Activated CD8-positive, alpha-beta memory T cell treated with anti-CD3 and anti-CD28 coated beads, Interleukin-2, amount 10 ng/mL, durations not matched to agents 7 days and 5 days (primary cell): ENCODE measurements at regions of chr16 and their contacts with region 1.

Region 1: DNA sequence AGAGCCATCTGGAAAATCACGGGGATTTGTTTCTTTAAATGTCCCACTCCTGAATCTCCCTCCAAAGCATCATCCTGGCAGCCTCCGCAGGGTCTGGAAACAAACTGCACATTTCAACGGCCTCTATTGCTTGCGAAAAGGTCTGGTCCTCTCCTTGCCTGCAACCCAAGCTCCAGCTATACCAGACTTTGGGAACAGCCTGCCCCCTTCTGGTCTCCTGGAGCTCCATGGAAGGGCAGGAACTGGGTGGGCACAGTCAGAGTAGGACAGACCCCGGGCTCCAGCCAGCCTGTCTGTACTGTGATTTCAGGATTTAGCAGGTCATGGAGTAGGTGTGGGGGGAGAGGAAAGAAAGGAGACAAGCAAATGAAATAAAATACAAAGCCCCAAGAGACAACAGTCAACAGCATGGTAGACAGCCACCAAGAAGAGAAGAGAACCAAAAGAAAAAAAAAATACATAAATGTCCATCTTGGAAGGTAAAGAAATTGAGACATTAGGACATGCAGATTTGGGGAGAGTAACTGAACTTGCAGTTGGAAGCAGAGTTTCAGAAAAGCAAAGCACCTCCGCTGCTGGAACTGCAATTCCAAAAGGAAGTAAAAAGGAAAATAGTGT is 2.7 kb downstream of the XYLT1 start:
- DNase-seq: peak; percentile 64
- ATAC-seq: peak; percentile 34
- H3K4me3 Mint-ChIP-seq: peak overlapping the region; percentile 99
- H3K27ac Mint-ChIP-seq: peak overlapping the region; percentile 29
- H3K4me1 Mint-ChIP-seq: peaks cover 57% of the 10 kb centered on the region
- H3K27me3 Mint-ChIP-seq: peaks cover 11% of the 10 kb centered on the region

Region 2: DNA sequence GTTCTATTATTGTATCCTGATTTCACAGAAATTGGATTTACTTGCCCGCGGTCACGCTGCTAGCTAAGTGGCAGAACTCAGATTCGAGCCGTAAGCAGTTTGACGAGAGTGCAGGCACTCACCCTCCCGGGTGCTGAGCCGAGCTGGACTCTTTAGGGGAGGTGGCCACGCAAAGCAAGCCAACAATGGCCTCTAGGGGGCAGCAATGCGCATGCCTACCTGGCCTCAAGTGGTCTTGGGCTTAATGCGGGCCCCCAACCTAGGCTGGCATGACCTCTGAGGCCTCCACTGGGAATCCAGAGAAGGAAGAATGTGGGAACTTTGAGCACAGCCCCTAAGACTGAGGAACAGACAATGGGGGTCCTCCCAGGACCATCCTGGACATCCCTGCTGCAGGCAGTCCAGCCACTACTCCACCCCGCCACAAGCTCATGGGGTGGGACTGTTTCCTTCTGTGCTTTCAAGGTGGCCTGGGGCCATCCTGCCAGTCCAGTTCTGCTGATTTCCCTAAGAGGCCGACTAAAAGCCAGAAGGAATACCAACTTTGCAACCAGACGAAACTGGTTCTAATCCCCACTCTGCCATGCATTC is 273.7 kb before region 1 on chr16:
- CTCF ChIA-PET with region 1: interaction called, 10 read pairs
- DNase-seq: peak; percentile 64
- ATAC-seq: no peak
- H3K4me3 Mint-ChIP-seq: no peak overlapping the region
- H3K27ac Mint-ChIP-seq: no peak overlapping the region
- H3K4me1 Mint-ChIP-seq: no peaks in the 10 kb centered on the region
- H3K27me3 Mint-ChIP-seq: no peaks in the 10 kb centered on the region

Region 3: DNA sequence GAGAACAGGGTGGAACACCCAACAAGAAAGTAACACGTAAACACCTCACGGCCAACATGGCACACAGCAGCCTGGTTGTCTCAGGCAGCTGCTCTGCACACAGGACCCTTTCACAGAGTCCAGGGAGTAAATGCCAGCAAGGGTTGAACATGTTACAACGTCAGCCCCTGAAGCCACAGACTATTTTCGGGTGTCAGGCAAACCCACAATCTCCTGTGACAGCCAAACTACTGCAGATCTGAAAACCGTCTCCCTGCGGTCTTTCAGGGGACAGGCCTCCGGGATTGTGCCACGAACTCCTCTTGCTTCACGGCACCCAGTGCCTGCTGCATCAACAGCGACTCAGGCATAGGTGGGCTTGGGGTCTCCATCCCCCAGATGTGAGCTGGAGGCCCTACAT is 125.0 kb before region 1 on chr16:
- CTCF ChIA-PET with region 1: interaction called, 16 read pairs
- DNase-seq: peak; percentile 89
- ATAC-seq: peak; percentile 59
- H3K4me3 Mint-ChIP-seq: peak overlapping the region; percentile 55
- H3K27ac Mint-ChIP-seq: peak overlapping the region; percentile 93
- H3K4me1 Mint-ChIP-seq: peaks cover 83% of the 10 kb centered on the region
- H3K27me3 Mint-ChIP-seq: no peaks in the 10 kb centered on the region

Region 4: DNA sequence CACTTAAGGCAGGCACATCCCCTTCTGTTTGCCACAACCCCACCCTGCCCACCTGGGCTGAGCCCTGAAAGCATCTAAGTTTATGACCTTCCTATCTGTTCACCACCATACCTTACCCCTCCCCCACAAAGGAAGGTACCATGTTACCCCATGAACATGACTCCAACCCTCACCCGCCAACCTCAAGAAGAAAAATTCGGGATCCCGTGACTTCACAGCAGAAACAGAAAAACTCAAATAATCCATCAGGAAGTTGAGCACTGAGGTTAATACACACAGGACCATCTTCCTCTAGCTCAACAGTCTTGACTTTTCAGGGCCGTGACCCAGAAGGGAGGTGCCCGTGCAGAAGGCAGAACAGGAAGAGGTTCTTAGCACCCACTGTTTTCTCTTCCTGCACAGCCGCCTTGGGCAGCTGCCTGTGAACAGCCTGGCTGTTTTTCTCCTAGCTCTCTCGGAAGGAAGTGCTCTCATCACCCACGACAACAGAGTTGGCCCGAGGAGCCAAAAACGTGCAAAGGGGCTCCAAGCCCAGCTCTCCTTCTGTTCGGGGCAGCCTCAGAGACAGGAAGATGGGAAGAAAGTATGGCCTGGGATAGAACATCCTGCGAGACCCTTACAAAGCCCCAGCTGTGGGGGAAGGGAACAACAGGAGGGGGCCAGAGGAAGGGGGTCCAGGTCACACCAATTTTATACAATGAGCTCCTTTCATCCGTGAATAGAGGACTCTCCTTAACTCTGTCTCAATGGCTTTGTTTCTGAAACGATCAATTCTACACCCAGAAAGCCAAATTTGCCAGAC is 98.4 kb before region 1 on chr16:
- CTCF ChIA-PET with region 1: interaction called, 39 read pairs
- DNase-seq: peak; percentile 89
- ATAC-seq: peak; percentile 88
- H3K4me3 Mint-ChIP-seq: peak overlapping the region; percentile 85
- H3K27ac Mint-ChIP-seq: peak overlapping the region; percentile 100
- H3K4me1 Mint-ChIP-seq: peaks cover 82% of the 10 kb centered on the region
- H3K27me3 Mint-ChIP-seq: no peaks in the 10 kb centered on the region

Region 5: DNA sequence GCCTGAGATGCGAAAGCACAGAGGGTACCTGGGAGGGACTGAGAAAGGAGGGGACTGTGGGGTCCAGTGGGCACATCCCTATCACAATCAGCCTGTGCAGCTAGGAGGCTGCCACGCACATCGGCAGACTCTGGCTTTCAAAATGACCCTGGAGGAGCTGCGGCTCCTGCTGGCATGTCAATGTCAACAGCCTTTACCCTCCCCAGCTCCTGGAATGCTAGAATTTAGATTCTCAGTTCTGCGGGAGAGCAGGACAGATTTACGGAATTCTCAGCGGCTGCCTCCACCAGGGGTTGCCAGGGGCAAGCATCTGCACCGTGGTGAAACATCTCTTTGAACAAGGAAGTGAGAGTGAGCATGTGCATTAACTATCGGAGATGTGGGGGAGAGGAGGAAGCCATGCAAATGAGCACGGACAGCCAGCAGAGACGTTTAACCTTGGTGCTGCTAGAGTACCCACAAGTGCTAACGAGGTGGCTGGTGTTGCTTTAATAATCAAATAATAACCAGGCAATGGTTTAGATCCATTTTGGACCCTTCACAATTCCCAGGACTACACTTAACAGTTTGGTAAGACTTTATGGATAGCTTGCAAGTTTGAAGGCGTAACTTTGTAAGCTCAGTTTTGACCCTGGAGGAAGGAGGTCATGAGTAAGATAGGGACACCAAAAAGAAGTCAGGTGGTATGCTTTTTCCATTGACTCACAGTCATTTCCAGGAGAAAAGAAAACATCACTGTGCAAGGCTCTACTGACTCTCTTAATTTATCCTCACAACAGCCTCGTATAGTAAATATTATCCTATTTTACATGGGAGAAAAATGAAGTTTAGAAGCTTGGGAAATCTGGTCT is 51.3 kb before region 1 on chr16:
- CTCF ChIA-PET with region 1: interaction called, 11 read pairs
- DNase-seq: peak; percentile 74
- ATAC-seq: peak; percentile 90
- H3K4me3 Mint-ChIP-seq: peak overlapping the region; percentile 64
- H3K27ac Mint-ChIP-seq: peak overlapping the region; percentile 90
- H3K4me1 Mint-ChIP-seq: peaks cover 48% of the 10 kb centered on the region
- H3K27me3 Mint-ChIP-seq: no peaks in the 10 kb centered on the region